ENCODE measurements at regions of chr6 and their contacts with region 1.

Region 1: DNA sequence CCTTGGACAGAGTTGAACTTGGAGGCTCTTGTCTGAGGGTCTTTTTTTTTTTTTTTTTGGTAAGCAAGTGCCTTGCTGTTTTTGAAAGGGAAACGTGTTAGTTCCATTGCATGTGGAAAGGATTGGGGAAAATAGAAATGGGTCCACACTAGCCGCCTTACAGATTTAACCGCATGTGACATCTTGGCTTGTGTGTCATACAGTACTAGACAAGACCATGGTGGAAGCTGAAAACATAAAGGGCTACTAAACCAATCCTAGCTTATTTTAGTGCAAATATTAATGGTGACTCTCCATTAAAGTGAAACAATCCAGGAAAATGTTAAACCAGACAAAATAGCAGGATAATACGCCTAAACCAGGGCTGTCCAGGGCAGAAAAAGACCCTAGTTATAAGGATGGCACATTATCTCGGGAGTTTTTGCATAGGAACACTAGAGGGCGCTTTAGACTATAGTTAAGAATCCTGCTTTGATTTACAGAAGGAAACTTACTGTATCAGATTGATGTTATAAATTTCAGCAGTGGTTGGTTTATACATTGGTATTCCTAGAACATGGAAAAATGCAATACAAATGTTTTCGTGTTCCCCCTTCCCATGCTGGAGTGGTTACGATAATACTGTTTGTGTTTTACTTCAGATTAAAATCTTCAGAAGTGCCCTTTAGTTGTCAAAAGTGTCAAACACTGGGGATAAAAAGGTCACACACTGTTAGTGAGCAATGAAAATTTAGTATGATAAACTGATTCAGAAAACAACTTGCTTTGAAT is 59.8 kb upstream of the DEK start:
- DNase-seq: no peak
- H3K4me3 ChIP-seq: no peak overlapping the region
- H3K27ac ChIP-seq: no peak overlapping the region
- H3K4me1 ChIP-seq: no peaks in the 10 kb centered on the region
- H3K27me3 ChIP-seq: no peaks in the 10 kb centered on the region
- CTCF ChIP-seq: peak; percentile 51 to 67 (median 55)
- POLR2A ChIP-seq: no peak

Region 2: DNA sequence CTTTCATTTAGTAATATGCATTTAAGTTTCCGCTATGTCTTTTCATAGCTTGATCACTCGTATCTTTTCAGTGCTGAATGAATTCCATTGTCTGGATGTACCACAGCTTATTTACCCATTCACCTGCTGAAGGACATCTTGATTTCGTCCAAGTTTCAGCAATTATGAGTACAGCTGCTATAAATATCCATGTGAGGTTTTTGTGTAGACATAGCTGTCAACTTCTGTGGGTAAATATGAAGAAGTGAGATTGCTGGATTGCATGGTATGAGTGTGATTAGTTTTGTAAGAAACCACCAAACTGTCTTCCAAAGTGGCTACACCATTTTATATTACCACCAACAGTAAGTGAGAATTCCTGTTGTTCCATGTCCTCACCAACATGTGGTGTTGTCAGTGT is 1301.5 kb before region 1 on chr6:
- intact Hi-C with region 1: no loop called
- DNase-seq: no peak
- H3K4me3 ChIP-seq: no peak overlapping the region
- H3K27ac ChIP-seq: no peak overlapping the region
- H3K4me1 ChIP-seq: no peaks in the 10 kb centered on the region
- H3K27me3 ChIP-seq: no peaks in the 10 kb centered on the region
- CTCF ChIP-seq: no peak
- POLR2A ChIP-seq: no peak

Region 3: GRCh38 chr6:18503593-18504231 is 179.6 kb after region 1 on chr6:
- intact Hi-C with region 1: loop called (anchors 2 kb)
- DNase-seq: no peak
- H3K4me3 ChIP-seq: peak overlapping the region; percentile 8 to 26
- H3K27ac ChIP-seq: no peak overlapping the region
- H3K4me1 ChIP-seq: peaks cover 7% of the 10 kb centered on the region
- H3K27me3 ChIP-seq: no peaks in the 10 kb centered on the region
- CTCF ChIP-seq: peak; percentile 80 to 91 (median 89)
- POLR2A ChIP-seq: no peak

Region 4: DNA sequence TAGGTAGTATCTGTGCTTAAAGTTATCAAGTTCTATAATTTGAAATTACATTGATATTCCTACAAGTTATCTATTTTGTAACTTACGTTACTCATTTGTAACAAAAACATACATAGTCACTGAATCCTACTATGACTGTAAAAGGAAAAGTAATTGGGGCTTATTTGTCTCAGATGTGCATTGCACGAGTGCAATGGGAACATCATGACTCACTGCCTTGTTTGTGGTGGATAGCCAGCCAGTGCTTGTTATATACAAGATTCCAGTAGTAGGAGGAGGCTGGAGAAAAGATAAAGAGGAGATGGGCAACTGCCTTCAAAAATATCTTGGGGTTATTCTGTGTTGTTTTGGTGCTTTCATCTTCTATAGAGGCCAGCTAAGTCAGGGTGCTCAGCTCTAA is 227.1 kb after region 1 on chr6:
- intact Hi-C with region 1: no loop called
- DNase-seq: no peak
- H3K4me3 ChIP-seq: no peak overlapping the region
- H3K27ac ChIP-seq: no peak overlapping the region
- H3K4me1 ChIP-seq: no peaks in the 10 kb centered on the region
- H3K27me3 ChIP-seq: no peaks in the 10 kb centered on the region
- CTCF ChIP-seq: no peak
- POLR2A ChIP-seq: no peak

Measured in vagina (tissue), 2 donors.